CD4-positive, alpha-beta memory T cell (primary cell): ENCODE measurements at regions of chr2 and their contacts with region 1.

Region 1: GRCh38 chr2:231604685-231605606 is 12.3 kb downstream of the TEX44 start:
- DNase-seq: peak; percentile 94 to 97 (median 96)
- H3K4me3 ChIP-seq: peak overlapping the region in 1 of 2 donors; percentile 52
- H3K4me3 Mint-ChIP-seq: peak overlapping the region; percentile 69 to 82 (median 74)
- H3K27ac ChIP-seq: peak overlapping the region; percentile 89
- H3K27ac Mint-ChIP-seq: peak overlapping the region; percentile 89 to 97 (median 95)
- H3K4me1 ChIP-seq: peaks cover 14% of the 10 kb centered on the region
- H3K4me1 Mint-ChIP-seq: peaks cover 4 to 14% (median 10%) of the 10 kb centered on the region in 4 donors
- H3K27me3 ChIP-seq: no peaks in the 10 kb centered on the region
- H3K27me3 Mint-ChIP-seq: no peaks in the 10 kb centered on the region

Region 2: DNA sequence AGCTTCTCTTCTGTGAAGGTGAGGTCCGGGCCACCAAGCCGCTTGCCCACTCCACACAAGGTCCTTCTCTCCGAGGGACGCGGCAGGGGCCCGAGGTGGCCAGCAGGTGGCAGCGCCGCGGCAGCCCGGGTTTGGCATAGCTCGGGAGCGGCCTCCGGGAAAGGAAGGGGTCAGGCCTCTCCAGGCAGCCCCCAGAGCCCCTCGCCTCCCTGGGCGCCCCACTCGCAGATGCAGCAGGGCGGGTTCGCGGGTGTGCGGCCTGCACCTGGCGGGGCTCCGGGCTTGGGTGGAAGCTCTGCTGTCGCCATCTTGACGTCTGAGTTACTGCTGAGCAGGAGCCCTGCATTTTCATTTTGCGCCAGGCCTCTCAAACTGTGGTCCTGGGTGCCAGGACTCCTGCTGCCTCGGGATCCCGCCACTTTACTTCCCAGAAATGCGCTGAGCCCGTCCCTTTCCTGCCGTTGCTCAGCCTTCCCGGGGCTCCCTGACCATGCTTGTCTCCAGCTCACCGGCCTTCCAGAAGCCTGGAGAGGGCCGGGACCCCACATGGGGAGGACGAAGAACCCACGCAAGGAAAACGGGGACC is 122.0 kb before region 1 on chr2:
- CTCF ChIA-PET with region 1: interaction called, 20 read pairs
- POLR2A ChIA-PET with region 1: interaction called, 6 read pairs
- intact Hi-C with region 1: loop called (anchors 1 kb)
- DNase-seq: peak; percentile 61 to 68 (median 65)
- H3K4me3 ChIP-seq: peak overlapping the region; percentile 62 to 65
- H3K4me3 Mint-ChIP-seq: peak overlapping the region; percentile 63 to 87 (median 79)
- H3K27ac ChIP-seq: peak overlapping the region; percentile 80
- H3K27ac Mint-ChIP-seq: peak overlapping the region; percentile 81 to 94 (median 89)
- H3K4me1 ChIP-seq: peaks cover 12% of the 10 kb centered on the region
- H3K4me1 Mint-ChIP-seq: peaks cover 4 to 27% (median 5%) of the 10 kb centered on the region in 4 donors
- H3K27me3 ChIP-seq: no peaks in the 10 kb centered on the region
- H3K27me3 Mint-ChIP-seq: no peaks in the 10 kb centered on the region

Region 3: DNA sequence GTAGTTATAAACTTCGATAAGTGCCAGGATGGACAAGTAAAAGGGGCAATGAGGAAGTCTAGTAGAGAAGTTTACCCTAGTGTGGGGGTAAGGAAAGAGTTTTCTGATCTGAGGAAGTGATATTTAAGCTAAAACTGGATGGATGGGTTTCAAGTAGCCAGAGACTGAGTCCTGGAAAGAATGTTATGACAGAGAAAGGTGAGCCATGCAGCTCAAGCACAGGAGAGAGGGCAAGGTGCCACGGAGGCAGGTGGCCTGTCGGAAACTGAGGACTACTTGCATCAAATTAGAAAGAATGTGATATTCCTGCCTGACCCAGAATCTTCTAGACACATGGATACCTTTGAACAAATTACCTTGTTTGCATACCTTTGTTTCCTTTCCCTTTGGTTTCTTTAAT is 101.2 kb before region 1 on chr2:
- CTCF ChIA-PET with region 1: no interaction called
- POLR2A ChIA-PET with region 1: no interaction called
- intact Hi-C with region 1: no loop called
- DNase-seq: no peak
- H3K4me3 ChIP-seq: no peak overlapping the region
- H3K4me3 Mint-ChIP-seq: no peak overlapping the region
- H3K27ac ChIP-seq: no peak overlapping the region
- H3K27ac Mint-ChIP-seq: no peak overlapping the region
- H3K4me1 ChIP-seq: no peaks in the 10 kb centered on the region
- H3K4me1 Mint-ChIP-seq: no peaks in the 10 kb centered on the region
- H3K27me3 ChIP-seq: no peaks in the 10 kb centered on the region
- H3K27me3 Mint-ChIP-seq: no peaks in the 10 kb centered on the region

Region 4: DNA sequence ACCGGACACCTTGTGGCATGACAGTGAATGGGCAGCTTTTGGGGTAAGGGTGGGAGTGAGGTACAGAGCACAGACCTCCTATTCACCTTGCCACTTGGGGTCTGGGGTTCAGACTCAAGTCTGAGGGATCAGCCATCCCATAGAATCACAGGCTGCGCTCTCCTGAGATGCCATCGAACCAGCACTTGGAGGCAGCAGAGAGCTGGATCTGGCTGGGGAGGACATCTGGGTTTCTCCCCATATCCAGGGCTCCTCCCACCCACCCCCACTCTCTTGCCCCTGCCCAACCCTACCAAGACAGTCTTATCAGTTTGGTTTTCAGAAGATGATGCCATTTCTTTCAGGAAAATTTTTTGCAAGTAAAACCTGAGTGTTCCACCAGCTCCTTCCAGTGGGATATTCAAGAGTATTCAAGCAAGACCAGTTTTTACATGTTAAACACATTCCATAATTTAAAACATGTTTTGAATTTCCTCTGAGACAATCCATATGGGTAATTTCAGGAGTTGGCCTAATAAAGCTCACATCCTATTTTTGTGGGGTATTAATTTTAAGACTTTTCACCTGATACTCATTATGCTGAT is 41.5 kb before region 1 on chr2:
- CTCF ChIA-PET with region 1: interaction called, 4 read pairs
- POLR2A ChIA-PET with region 1: interaction called, 3 read pairs
- intact Hi-C with region 1: loop called (anchors 2 kb)
- DNase-seq: no peak
- H3K4me3 ChIP-seq: no peak overlapping the region
- H3K4me3 Mint-ChIP-seq: no peak overlapping the region
- H3K27ac ChIP-seq: no peak overlapping the region
- H3K27ac Mint-ChIP-seq: no peak overlapping the region
- H3K4me1 ChIP-seq: no peaks in the 10 kb centered on the region
- H3K4me1 Mint-ChIP-seq: no peaks in the 10 kb centered on the region
- H3K27me3 ChIP-seq: no peaks in the 10 kb centered on the region
- H3K27me3 Mint-ChIP-seq: no peaks in the 10 kb centered on the region

Region 5: DNA sequence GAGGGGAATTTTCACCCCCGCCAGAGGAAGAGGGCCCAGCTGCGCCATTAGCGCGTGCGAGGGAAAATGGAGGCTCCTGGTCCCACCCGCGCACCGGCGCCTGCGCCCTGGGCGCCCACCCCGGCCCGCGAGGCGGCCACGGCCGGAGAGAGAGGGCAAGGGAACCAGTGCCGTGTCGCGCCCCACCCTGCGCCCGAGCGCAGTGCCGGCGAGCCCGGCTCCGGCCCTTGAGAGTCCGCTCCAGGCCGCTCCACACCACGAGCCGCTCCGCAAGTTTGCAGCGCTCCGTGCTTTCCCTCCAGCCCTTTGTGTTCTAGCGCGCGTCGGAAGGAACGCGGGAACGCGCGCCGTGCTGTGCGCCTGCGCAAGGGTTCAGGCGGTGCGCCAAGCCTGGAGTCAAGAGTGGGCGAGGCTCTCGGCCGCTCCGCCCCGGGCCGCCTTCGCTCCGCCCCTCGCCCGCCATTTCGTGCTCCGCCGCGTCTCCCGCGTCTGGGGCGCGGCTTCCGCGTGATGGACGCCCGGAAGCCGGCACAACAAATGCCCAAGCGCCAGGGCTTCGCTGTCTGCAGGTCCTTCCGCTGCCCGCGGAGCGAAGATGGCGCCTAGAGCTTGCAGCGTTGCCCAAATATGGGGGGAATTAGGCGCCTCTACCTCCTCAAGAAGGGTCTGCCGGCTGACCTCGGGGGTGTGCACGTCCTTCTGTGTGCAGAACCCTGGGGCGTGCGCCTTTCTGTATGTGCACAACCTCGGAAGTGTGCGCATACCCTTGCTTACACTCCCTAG is 57.3 kb after region 1 on chr2:
- CTCF ChIA-PET with region 1: no interaction called
- POLR2A ChIA-PET with region 1: interaction called, 3 read pairs
- intact Hi-C with region 1: loop called (anchors 1 kb)
- DNase-seq: peak; percentile 93 to 99 (median 99)
- H3K4me3 ChIP-seq: peak overlapping the region; percentile 43 to 60
- H3K4me3 Mint-ChIP-seq: peak overlapping the region; percentile 75 to 86 (median 80)
- H3K27ac ChIP-seq: peak overlapping the region; percentile 86
- H3K27ac Mint-ChIP-seq: peak overlapping the region; percentile 90 to 99 (median 97)
- H3K4me1 ChIP-seq: peaks cover 14% of the 10 kb centered on the region
- H3K4me1 Mint-ChIP-seq: peaks cover 5 to 23% (median 13%) of the 10 kb centered on the region in 4 donors
- H3K27me3 ChIP-seq: no peaks in the 10 kb centered on the region
- H3K27me3 Mint-ChIP-seq: no peaks in the 10 kb centered on the region

Region 6: DNA sequence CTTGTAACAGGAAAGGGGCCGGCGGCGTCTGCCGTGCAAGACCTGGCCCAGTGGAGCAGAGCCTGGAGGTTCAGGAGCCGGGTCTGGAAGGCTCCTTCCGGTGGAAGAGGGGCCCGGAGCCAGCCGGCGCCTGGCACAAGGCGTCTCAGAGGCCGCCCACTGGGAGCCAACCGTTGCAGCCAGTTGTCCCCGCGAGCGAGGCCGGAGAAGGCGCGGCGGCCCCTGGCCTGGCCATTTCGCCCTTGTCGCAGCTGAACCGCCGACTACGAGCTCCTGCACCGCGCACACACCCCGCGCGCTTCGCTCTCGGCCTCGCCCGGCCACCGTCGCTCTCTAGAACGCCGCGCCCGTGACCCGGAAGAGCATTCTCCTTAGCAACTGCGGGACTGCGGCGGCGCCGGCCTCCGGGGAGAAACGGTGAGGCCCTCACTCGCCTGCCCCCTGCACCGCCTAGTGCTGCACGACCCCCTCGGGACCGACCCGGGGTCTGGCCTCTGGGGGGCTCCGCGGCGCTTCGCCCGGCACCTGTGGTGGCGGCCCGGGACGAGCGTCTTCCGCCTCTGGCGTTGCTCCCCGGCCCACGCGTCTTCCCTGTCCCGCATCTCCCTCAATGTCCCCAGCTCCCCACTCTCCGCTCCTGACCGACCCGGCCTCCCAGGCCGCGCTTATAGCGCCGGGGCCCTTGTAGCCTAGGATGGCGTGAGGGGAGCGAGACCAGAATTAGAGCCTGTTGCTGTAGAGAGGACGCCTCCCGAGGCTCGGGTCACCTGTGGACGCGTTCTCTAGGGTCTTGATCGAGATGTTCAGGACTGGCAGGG is 356.6 kb after region 1 on chr2 and contains the start of gene DIS3L2:
- CTCF ChIA-PET with region 1: no interaction called
- POLR2A ChIA-PET with region 1: no interaction called
- intact Hi-C with region 1: no loop called
- DNase-seq: peak; percentile 76 to 81 (median 80)
- H3K4me3 ChIP-seq: peak within 1 kb of the TSS; percentile 81 to 98
- H3K4me3 Mint-ChIP-seq: peak within 1 kb of the TSS; percentile 93 to 98 (median 96)
- H3K27ac ChIP-seq: peak within 1 kb of the TSS; percentile 51
- H3K27ac Mint-ChIP-seq: peak within 1 kb of the TSS; percentile 92 to 97 (median 93)
- H3K4me1 ChIP-seq: peaks cover 14% of the 10 kb centered on the region
- H3K4me1 Mint-ChIP-seq: peaks cover 29 to 53% (median 37%) of the 10 kb centered on the region in 4 donors
- H3K27me3 ChIP-seq: no peaks in the 10 kb centered on the region
- H3K27me3 Mint-ChIP-seq: peaks cover 0 to 5% of the 10 kb centered on the region in 2 donors
- total RNA-seq, gene DIS3L2: 56.0 to 59.7 TPM